ENCODE measurements at regions of chr12 and their contacts with region 1.

Region 1: DNA sequence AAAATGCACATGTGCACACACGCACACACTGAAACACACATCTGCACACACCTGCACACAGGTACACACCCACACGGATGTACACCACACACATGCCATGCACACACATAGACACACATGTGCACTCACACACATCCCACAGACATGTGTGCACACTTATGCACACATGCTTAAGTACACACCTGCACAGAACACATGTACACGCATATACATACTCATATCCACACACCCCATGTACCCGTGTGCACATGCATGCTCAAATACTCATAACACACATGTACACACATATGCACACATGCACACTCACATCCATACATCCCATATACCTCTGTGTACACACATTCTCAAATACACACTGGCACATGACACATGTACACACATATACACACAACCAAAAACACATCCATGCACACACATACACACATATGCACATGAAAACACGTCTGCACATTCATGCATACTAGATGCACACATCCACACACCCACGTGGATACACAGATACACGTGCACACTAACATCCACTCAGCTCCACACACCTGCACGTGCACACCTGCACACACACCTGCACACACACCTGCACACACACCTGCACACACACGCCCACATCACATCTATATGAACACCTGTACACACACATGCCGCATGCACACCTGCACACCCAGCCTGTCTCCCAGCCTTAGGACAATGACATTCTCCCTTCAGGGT is 336.7 kb downstream of the ADGRD1 start:
- DNase-seq: no peak
- H3K4me3 ChIP-seq: no peak overlapping the region
- H3K27ac ChIP-seq: no peak overlapping the region
- H3K4me1 ChIP-seq: no peaks in the 10 kb centered on the region
- H3K27me3 ChIP-seq: peaks cover 0 to 13% of the 10 kb centered on the region in 2 donors
- CTCF ChIP-seq: no peak

Region 2: DNA sequence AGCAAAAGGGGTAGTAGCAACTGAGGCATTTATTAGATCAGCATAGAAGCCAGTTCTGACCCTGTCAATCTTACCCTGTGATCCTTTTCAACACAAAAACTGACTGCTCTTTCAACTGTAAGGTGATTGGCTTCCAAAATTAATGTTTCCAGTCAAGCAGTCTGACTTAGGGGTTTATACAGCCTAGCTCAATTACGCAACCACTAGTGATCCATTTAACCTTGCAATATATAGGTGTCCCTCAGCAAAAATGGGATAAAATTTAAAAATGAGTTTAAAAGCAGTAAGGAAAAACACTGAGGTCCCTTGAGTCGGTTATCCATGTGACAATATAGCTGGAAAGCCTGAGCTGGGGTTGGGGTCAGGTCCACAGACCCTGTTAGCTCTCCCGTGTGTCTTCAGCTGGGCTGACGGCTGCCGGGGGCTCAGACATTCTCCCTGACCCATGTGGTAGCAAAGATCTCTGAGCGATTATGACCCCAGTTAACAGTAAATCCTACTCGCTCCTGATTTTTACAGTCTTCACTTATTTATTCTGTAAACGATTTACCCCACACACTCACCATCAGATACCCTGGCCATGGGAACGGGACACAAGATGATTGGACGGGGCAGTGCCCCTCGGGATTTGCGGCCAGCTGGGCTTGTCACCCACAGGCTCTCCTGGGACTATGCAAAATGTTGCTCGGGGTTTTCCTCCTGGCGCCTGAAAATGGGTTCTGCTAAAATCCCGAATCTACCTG is 320.1 kb before region 1 on chr12:
- intact Hi-C with region 1: no loop called
- DNase-seq: no peak
- H3K4me3 ChIP-seq: no peak overlapping the region
- H3K27ac ChIP-seq: no peak overlapping the region
- H3K4me1 ChIP-seq: no peaks in the 10 kb centered on the region
- H3K27me3 ChIP-seq: no peaks in the 10 kb centered on the region
- CTCF ChIP-seq: no peak

Region 3: DNA sequence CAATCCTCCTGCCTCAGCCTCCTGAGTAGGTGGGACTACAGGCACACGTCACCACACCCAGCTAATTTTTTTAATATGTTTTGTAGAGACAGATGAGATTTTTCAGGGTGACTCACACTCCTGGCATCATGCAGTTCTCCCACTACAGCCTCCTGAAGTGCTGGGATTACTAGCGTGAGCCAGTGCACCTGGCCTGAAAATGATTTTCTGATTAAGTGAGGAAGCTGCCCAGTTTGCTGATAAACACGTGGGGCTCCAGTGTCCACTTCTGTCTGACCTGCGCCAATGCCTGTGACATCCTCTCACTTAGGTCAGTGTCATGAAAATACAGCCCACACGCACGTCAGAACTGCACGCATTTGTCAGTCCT is 383.5 kb after region 1 on chr12:
- intact Hi-C with region 1: loop called (anchors 10 kb)
- DNase-seq: peak in 1 of 2 donors; percentile 25
- H3K4me3 ChIP-seq: no peak overlapping the region
- H3K27ac ChIP-seq: no peak overlapping the region
- H3K4me1 ChIP-seq: no peaks in the 10 kb centered on the region
- H3K27me3 ChIP-seq: peaks cover 0 to 23% of the 10 kb centered on the region in 2 donors
- CTCF ChIP-seq: no peak

Measured in tibial artery (tissue), 4 donors.